Activated T-helper 2 cell treated with anti-CD3 and anti-CD28 coated beads, Interferon-gamma antibody, Interleukin-2, Interleukin-4, amounts not matched to agents 10 μg/mL and 5 μg/mL and 100 μg/mL, durations not matched to agents 14 hours and 24 hours and 36 hours (primary cell): ENCODE measurements at regions of chr1 and their contacts with region 1.

Region 1: GRCh38 chr1:35947547-35947946 is 16.6 kb downstream of the AGO3 start:
- DNase-seq: no peak
- H3K4me3 Mint-ChIP-seq: peak overlapping the region; percentile 34
- H3K27ac Mint-ChIP-seq: peak overlapping the region; percentile 62
- H3K4me1 Mint-ChIP-seq: peaks cover 29% of the 10 kb centered on the region
- H3K27me3 Mint-ChIP-seq: no peaks in the 10 kb centered on the region

Region 2: DNA sequence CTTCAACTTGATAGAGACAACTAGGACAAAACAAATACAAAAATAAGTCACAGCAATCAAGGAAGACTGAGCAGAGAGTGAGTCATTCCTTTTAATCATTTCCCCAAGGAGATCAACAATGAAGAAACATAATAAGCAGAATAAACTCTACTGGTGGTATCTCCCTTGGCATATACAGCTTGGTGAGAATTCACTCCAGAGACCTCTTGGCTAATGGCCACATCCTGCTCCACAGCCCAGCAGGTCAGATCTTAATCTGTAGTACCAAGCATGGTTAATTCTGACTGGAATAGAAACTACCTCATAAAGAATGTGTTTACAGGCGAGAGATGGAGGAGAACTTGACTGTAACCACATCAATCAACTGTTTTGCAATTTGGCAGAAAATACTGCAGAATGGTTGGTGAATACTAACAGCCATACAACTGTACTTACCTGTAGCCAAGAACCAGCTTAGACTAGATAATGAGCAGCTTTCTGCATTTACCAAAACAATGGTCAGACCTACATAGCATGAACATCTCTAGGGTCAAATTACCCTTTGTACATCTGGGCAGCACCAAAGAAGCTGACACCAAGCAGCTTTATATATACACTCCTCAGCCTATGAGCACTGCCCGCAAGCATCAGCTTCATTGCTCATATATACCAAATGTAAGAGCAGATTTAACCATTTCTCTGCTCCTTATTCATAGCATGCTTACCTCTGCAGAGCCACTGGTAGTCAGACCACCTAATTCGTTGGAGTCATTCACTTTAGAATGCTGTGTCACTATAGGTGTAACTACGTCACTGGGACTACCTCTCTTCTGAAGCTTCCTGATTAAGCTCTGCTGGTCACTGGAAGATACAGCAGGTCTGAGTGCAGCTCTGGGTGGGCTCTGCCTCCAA is 441.4 kb before region 1 on chr1:
- intact Hi-C with region 1: loop called (anchors 10 kb)
- DNase-seq: peak; percentile 69
- H3K4me3 Mint-ChIP-seq: peak overlapping the region; percentile 66
- H3K27ac Mint-ChIP-seq: peak overlapping the region; percentile 86
- H3K4me1 Mint-ChIP-seq: peaks cover 71% of the 10 kb centered on the region
- H3K27me3 Mint-ChIP-seq: no peaks in the 10 kb centered on the region

Region 3: GRCh38 chr1:35650416-35650815 is 297.1 kb before region 1 on chr1:
- intact Hi-C with region 1: no loop called
- DNase-seq: no peak
- H3K4me3 Mint-ChIP-seq: no peak overlapping the region
- H3K27ac Mint-ChIP-seq: no peak overlapping the region
- H3K4me1 Mint-ChIP-seq: no peaks in the 10 kb centered on the region
- H3K27me3 Mint-ChIP-seq: peaks cover 61% of the 10 kb centered on the region

Region 4: DNA sequence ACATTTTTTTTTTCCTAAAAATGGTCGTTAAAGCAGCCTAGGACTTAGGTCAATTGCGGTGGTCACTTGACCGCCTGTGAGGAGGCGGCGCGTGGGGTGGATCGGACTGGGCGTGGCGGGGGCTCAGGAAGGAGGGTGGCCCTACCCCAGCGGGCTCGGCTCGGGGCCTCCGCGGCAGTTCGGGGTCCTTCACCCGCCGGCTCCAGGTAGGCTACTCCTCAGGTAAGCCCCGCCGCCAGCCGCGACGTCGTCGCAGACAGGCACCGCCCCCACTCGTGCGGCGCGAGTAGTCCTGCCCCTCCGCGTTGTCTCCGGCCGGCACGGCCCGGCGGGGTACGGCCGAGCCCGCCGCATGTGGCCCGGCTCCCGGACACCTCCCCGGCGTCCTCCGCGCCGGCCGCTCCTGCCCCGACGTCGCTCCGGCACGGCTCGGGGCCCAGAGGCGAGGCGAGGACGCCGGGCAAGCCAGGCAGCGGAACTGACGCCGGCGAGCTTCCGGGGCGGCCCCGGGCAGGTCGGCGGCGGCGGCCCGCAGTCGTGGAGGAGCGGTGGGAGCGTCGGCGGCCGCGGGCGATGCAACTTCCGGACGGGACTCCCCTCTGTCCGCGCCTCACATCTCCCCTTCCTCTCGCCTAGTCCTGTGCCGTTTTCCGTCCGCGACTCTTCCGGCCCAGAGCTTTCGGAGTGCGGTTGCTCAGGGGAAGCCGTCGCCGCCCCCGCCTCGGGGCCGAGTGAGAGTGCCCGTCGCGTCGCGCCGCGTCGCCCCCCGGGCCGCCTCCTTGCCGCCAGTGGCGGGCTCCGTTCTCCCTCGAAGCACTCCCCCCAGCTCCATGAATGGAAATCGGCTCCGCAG is 16.7 kb before region 1 on chr1 and contains the start of gene AGO3:
- intact Hi-C with region 1: loop called (anchors 1 kb)
- DNase-seq: peak; percentile 86
- H3K4me3 Mint-ChIP-seq: peak within 1 kb of the TSS; percentile 90
- H3K27ac Mint-ChIP-seq: peak within 1 kb of the TSS; percentile 96
- H3K4me1 Mint-ChIP-seq: peaks cover 27% of the 10 kb centered on the region
- H3K27me3 Mint-ChIP-seq: no peaks in the 10 kb centered on the region
- total RNA-seq, gene AGO3: 21.2 and 26.7 TPM in 2 replicates

Region 5: DNA sequence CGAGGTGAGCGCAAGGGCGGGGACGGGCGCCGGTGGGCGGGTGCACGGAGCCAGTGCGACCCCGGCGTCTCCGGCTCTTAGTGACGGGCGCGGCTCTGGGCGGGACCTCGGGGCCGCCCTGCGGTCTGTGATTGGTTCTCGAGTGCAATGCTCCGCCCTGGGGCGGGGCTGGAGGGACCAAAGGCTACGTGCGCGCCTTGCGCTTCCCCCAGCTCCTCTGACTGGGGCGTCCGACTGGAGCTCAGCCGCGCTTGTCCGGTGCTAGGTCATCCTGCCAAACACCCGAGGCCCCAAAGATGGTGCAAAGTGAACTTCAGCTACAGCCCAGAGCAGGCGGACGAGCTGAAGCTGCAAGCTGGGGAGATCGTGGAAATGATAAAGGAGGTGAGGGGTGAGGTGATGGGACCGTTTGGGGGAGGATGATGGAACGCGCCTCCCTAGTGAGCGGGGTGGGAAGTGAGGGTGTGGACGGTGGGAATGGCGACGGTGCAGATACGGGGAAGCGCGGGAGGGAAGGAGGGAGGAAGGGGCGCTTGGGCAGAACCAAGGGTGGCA is 359.4 kb after region 1 on chr1:
- intact Hi-C with region 1: loop called (anchors 10 kb)
- DNase-seq: peak; percentile 93
- H3K4me3 Mint-ChIP-seq: peak overlapping the region; percentile 99
- H3K27ac Mint-ChIP-seq: peak overlapping the region; percentile 95
- H3K4me1 Mint-ChIP-seq: peaks cover 37% of the 10 kb centered on the region
- H3K27me3 Mint-ChIP-seq: no peaks in the 10 kb centered on the region

Region 6: DNA sequence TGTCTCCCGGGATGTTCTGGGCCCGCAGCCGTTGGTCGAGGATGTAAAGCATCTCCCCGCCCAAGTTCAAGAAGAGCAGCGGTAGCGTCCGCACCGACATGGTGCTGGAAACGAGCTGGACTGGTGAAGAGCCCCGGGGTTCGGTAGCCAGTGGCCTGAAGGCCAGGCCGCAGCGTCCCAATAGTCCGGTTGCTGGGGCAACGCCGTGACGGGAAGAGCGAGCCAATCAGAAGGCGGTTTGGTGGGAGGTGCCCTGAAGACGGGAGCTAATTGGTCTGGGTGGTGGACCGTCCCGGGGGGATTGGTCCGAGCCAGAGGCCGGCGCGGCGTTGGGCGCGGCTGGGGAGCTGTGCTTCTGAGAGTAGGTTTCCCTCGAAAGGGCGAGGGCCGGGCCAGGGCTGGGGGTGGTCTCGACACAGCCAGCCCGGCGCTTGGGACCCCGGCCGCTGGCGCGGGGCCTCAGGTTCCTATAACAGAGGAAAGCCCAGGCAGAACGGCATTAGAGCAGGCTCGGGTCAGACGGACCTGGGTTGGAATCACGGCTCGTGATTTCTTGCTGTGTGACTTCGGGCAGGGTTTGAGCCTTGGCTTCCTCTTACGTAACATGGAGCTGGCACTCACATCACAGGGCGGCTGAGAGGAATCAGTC is 502.8 kb after region 1 on chr1 and contains the start of gene OSCP1:
- intact Hi-C with region 1: loop called (anchors 10 kb)
- DNase-seq: peak; percentile 85
- H3K4me3 Mint-ChIP-seq: peak within 1 kb of the TSS; percentile 77
- H3K27ac Mint-ChIP-seq: peak within 1 kb of the TSS; percentile 74
- H3K4me1 Mint-ChIP-seq: peaks cover 26% of the 10 kb centered on the region
- H3K27me3 Mint-ChIP-seq: no peaks in the 10 kb centered on the region
- total RNA-seq, gene OSCP1: 0.59 and 1.2 TPM in 2 replicates